ENCODE measurements at regions of chr11 and their contacts with region 1.

Region 1: DNA sequence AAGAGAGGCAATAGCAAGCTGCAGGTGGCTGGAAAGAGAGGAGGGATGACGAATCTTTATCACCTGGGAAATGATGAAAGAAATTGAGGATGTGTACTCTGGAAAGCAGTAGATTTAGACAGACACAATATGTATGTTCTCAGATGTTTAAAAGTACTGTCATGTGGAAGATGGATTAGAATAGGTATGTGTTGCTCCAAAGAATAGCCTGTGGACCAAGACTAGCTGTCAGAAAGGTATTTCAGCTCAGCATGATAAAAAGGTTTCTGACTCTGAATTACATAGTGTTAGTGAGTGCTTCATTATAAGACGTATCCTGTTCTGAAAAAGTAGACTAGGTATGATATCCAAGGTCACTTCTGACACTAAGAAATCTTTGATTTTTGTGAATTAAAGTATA is 322.4 kb downstream of the CNTN5 start:
- DNase-seq: no peak
- H3K4me3 Mint-ChIP-seq: no peak overlapping the region
- H3K27ac Mint-ChIP-seq: no peak overlapping the region
- H3K4me1 Mint-ChIP-seq: no peaks in the 10 kb centered on the region
- H3K27me3 Mint-ChIP-seq: no peaks in the 10 kb centered on the region

Region 2: GRCh38 chr11:98390391-98390790 is 952.7 kb before region 1 on chr11:
- intact Hi-C with region 1: loop called (anchors 5 kb)
- DNase-seq: no peak
- H3K4me3 Mint-ChIP-seq: no peak overlapping the region
- H3K27ac Mint-ChIP-seq: no peak overlapping the region
- H3K4me1 Mint-ChIP-seq: no peaks in the 10 kb centered on the region
- H3K27me3 Mint-ChIP-seq: no peaks in the 10 kb centered on the region

Region 3: GRCh38 chr11:99142237-99142636 is 200.9 kb before region 1 on chr11:
- intact Hi-C with region 1: no loop called
- DNase-seq: no peak
- H3K4me3 Mint-ChIP-seq: no peak overlapping the region
- H3K27ac Mint-ChIP-seq: no peak overlapping the region
- H3K4me1 Mint-ChIP-seq: no peaks in the 10 kb centered on the region
- H3K27me3 Mint-ChIP-seq: no peaks in the 10 kb centered on the region

Measured in activated T-helper 1 cell treated with anti-CD3 and anti-CD28 coated beads, Interleukin-12 subunit alpha, Interleukin-12 subunit beta, Interleukin-2, Interleukin-4 antibody, amounts not matched to agents 30 ng/mL and 10 ng/mL and 1 ng/mL, durations not matched to agents 14 hours and 24 hours and 36 hours (primary cell).